ENCODE measurements at regions of chr3 and their contacts with region 1.

Region 1: GRCh38 chr3:127544192-127544802 is 46.2 kb downstream of the TPRA1 start:
- DNase-seq: peak; percentile 60 to 76 (median 67)
- H3K4me3 ChIP-seq: no peak overlapping the region
- H3K27ac ChIP-seq: no peak overlapping the region
- H3K4me1 ChIP-seq: peaks cover 4% of the 10 kb centered on the region
- H3K27me3 ChIP-seq: no peaks in the 10 kb centered on the region
- CTCF ChIP-seq: peak in 1 of 3 donors; percentile 47
- EP300 ChIP-seq: no peak
- POLR2A ChIP-seq: no peak

Region 2: GRCh38 chr3:126522363-126522788 is 1021.9 kb before region 1 on chr3:
- intact Hi-C with region 1: loop called in 2 of 4 experiments (anchors 10 kb)
- DNase-seq: peak; percentile 44 to 72 (median 59)
- H3K4me3 ChIP-seq: no peak overlapping the region
- H3K27ac ChIP-seq: no peak overlapping the region
- H3K4me1 ChIP-seq: no peaks in the 10 kb centered on the region
- H3K27me3 ChIP-seq: no peaks in the 10 kb centered on the region
- CTCF ChIP-seq: peak; percentile 61 to 89 (median 61)
- EP300 ChIP-seq: no peak
- POLR2A ChIP-seq: no peak

Region 3: GRCh38 chr3:126752303-126752842 is 791.9 kb before region 1 on chr3:
- intact Hi-C with region 1: loop called in 1 of 4 experiments (anchors 5 kb)
- DNase-seq: peak; percentile 73 to 87 (median 81)
- H3K4me3 ChIP-seq: no peak overlapping the region
- H3K27ac ChIP-seq: no peak overlapping the region
- H3K4me1 ChIP-seq: no peaks in the 10 kb centered on the region
- H3K27me3 ChIP-seq: no peaks in the 10 kb centered on the region
- CTCF ChIP-seq: peak; percentile 54 to 78 (median 78)
- EP300 ChIP-seq: no peak
- POLR2A ChIP-seq: no peak

Region 4: GRCh38 chr3:126995926-126996512 is 548.3 kb before region 1 on chr3:
- intact Hi-C with region 1: loop called in 1 of 4 experiments (anchors 10 kb)
- DNase-seq: no peak
- H3K4me3 ChIP-seq: no peak overlapping the region
- H3K27ac ChIP-seq: no peak overlapping the region
- H3K4me1 ChIP-seq: peaks cover 8% of the 10 kb centered on the region
- H3K27me3 ChIP-seq: no peaks in the 10 kb centered on the region
- CTCF ChIP-seq: no peak
- EP300 ChIP-seq: no peak
- POLR2A ChIP-seq: no peak

Region 5: DNA sequence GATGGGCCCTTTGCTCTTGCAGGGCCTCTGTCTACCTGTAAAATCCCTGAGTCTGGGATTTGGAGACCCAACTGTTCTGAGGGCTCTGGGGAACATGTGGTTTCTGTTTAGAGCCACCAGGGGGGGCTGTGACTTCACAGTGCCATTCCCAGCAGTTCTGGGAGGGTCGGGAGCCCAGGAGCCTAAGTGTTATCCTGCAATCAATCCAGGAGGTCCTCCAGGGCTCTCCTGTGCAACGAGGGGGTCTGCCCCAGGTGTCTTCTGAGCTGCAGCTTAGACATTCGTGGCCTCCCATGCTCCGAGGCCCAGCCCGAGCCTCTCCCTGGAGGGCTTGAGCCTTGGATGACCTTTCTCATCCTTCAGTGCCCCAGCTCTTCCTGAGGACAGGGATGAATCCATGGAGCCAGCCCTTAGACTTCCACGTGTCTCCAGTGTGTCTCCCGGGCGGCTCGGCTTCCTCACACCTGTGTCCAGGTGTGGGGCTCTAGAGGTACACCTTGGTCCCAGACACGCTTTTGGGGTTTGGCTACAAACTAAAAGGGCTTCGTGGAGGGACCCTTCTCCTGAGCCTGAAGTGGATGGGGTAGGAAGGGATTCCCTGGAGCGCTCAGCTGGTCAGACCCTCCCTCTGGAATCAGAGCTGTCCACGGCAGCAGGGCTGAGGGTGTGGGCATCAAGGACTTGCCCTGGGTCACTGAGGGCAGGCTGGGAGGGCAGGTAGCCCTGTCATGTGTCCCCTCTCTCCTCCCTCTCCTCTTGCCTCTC is 108.1 kb after region 1 on chr3:
- intact Hi-C with region 1: no loop called
- DNase-seq: peak in 4 of 5 donors; percentile 42 to 61 (median 50)
- H3K4me3 ChIP-seq: no peak overlapping the region
- H3K27ac ChIP-seq: no peak overlapping the region
- H3K4me1 ChIP-seq: peaks cover 2% of the 10 kb centered on the region
- H3K27me3 ChIP-seq: no peaks in the 10 kb centered on the region
- CTCF ChIP-seq: peak; percentile 51 to 69 (median 61)
- EP300 ChIP-seq: no peak
- POLR2A ChIP-seq: no peak

Region 6: GRCh38 chr3:127723011-127723567 is 178.8 kb after region 1 on chr3:
- intact Hi-C with region 1: no loop called
- DNase-seq: peak in 1 of 5 donors; percentile 8
- H3K4me3 ChIP-seq: no peak overlapping the region
- H3K27ac ChIP-seq: no peak overlapping the region
- H3K4me1 ChIP-seq: no peaks in the 10 kb centered on the region
- H3K27me3 ChIP-seq: no peaks in the 10 kb centered on the region
- CTCF ChIP-seq: no peak
- EP300 ChIP-seq: no peak
- POLR2A ChIP-seq: no peak

Measured in ovary (tissue), 10 donors.